Mucosa of descending colon (tissue), 3 donors: ENCODE measurements at regions of chr6 and their contacts with region 1.

Region 1: DNA sequence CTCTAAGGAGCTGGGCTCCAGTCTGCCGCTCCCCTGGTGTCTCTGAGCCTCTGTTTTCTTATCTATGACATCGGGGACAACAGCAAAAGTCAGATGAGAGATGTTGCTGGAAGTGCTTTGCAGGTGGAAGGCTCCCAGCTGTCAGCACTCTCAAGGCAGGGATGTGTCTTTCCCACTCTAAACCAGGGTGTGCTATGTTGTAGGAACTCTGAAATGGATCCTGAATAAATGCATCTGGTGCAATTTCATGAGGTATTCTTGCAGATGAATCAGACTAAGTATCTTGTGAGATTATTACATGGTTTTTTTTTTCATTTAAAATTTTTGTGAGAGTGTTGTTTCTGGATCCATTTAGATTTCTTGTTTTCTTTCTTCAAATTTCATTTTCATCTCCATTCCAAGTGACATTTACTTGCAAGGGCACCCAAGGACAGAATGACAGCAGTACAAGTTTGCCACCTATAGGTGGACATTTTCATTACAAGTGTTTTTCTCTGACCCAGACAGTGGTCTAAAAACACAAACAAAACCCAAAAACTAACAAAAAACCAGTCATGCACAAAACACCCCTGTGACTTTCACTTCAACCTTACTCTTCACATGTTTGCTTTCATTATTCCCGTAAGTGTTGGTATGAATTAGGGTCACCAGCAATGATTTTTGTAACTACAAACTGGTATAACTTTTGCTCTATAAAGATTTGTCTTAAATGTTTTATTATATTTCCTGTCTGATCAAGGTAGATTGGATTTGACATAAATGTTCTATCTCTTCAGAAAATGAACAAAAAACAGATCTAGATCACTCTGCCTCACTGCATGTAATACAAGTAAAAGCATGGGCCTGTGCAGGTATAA is 14.7 kb upstream of the SIM1 start:
- DNase-seq: no peak
- ATAC-seq: no peak
- H3K4me3 ChIP-seq: no peak overlapping the region
- H3K4me1 ChIP-seq: no peaks in the 10 kb centered on the region
- CTCF ChIP-seq: peak; percentile 49

Region 2: GRCh38 chr6:99846006-99846405 is 633.4 kb before region 1 on chr6:
- intact Hi-C with region 1: no loop called
- DNase-seq: no peak
- ATAC-seq: no peak
- H3K4me3 ChIP-seq: no peak overlapping the region
- H3K4me1 ChIP-seq: no peaks in the 10 kb centered on the region
- CTCF ChIP-seq: no peak

Region 3: GRCh38 chr6:100001915-100002388 is 477.5 kb before region 1 on chr6:
- intact Hi-C with region 1: loop called in 1 of 2 experiments (anchors 10 kb)
- DNase-seq: peak in 2 of 3 donors; percentile 17 to 37
- ATAC-seq: peak; percentile 70
- H3K4me3 ChIP-seq: no peak overlapping the region
- H3K4me1 ChIP-seq: no peaks in the 10 kb centered on the region
- CTCF ChIP-seq: peak; percentile 81

Region 4: DNA sequence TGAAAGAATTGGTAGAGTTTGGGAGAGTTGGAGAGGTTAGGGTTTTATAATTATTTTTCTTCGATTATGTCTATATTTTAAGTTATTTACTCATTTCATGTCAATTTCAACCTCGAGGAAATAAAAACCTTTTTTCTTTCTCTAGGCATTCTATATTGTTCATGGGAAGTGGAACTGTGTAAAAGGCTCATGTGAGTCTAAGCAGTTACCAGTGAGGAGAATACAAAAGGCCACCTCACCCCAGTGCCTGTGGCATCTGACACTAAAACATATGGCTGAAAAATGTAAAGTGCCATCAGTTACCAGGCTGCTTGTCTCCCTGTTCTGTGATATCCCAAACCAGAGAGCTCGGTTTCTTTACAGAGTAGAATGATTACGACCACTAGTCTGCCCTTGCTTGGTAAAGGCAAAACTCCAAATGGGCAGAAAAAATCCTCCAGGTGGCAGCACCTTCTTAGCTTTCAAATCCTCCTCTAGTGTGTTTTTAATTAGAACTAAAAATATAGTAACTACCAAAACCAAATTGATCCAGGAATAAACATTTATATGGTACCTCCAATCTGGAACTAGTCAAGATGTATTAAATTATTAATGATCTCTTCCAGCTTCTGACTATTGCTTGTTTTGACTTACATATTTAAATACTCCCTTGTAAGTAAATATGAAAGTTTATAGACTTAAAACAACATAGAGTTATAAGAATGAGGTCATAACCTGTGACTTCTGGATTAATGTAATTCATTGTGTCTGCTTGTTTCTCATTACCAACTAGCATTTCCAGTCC is 362.8 kb before region 1 on chr6:
- intact Hi-C with region 1: loop called in 1 of 2 experiments (anchors 10 kb)
- DNase-seq: peak in 1 of 3 donors; percentile 67
- ATAC-seq: no peak
- H3K4me3 ChIP-seq: no peak overlapping the region
- H3K4me1 ChIP-seq: no peaks in the 10 kb centered on the region
- CTCF ChIP-seq: no peak

Region 5: DNA sequence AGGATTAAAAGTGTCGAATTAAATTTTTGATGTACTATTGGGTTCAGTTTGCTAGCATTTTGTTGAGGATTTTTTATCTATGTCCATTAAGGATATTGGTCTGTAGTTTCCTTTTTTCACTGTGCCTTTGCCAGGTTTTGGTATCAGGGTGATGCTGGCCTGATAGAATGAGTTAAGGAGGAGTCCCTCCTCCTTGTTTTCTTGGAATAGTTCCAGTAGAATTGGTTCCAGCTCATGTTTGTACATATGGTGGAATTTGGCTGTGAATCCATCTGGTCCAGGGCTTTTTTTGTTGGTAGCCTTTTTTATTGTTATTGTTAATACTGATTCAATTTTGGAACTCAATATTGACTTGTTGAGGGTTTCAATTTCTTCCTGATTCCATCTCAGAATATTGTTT is 156.5 kb before region 1 on chr6:
- intact Hi-C with region 1: no loop called
- DNase-seq: no peak
- ATAC-seq: no peak
- H3K4me3 ChIP-seq: no peak overlapping the region
- H3K4me1 ChIP-seq: no peaks in the 10 kb centered on the region
- CTCF ChIP-seq: no peak

Region 6: GRCh38 chr6:100851819-100852218 is 372.4 kb after region 1 on chr6:
- intact Hi-C with region 1: no loop called
- DNase-seq: no peak
- ATAC-seq: no peak
- H3K4me3 ChIP-seq: no peak overlapping the region
- H3K4me1 ChIP-seq: no peaks in the 10 kb centered on the region
- CTCF ChIP-seq: no peak